Esophagus muscularis mucosa (tissue), 4 donors: ENCODE measurements at regions of chrX and their contacts with region 1.

Region 1: GRCh38 chrX:136214551-136214950 is 36.6 kb downstream of the MAP7D3 start:
- DNase-seq: no peak
- H3K4me3 ChIP-seq: no peak overlapping the region
- H3K27ac ChIP-seq: peak overlapping the region; percentile 86 to 99 (median 96)
- H3K4me1 ChIP-seq: peaks cover 0 to 21% (median 17%) of the 10 kb centered on the region in 4 donors
- H3K27me3 ChIP-seq: no peaks in the 10 kb centered on the region
- CTCF ChIP-seq: no peak
- EP300 ChIP-seq: no peak
- POLR2A ChIP-seq: no peak

Region 2: GRCh38 chrX:136047969-136048368 is 166.6 kb before region 1 on chrX:
- intact Hi-C with region 1: loop called (anchors 5 kb)
- DNase-seq: no peak
- H3K4me3 ChIP-seq: no peak overlapping the region
- H3K27ac ChIP-seq: peak overlapping the region in 1 of 4 donors; percentile 11
- H3K4me1 ChIP-seq: peaks cover 0 to 22% (median 11%) of the 10 kb centered on the region in 4 donors
- H3K27me3 ChIP-seq: peaks cover 0 to 2% (median 0%) of the 10 kb centered on the region in 4 donors
- CTCF ChIP-seq: no peak
- EP300 ChIP-seq: no peak
- POLR2A ChIP-seq: no peak

Region 3: GRCh38 chrX:136251041-136251991 is 36.8 kb after region 1 on chrX and contains the start of gene MAP7D3:
- intact Hi-C with region 1: loop called (anchors 5 kb)
- DNase-seq: no peak
- H3K4me3 ChIP-seq: peak within 1 kb of the TSS; percentile 73 to 85 (median 80)
- H3K27ac ChIP-seq: peak within 1 kb of the TSS; percentile 86 to 91 (median 88)
- H3K4me1 ChIP-seq: peaks cover 0 to 19% (median 10%) of the 10 kb centered on the region in 4 donors
- H3K27me3 ChIP-seq: peaks cover 0 to 4% (median 0%) of the 10 kb centered on the region in 4 donors
- CTCF ChIP-seq: no peak
- EP300 ChIP-seq: no peak
- POLR2A ChIP-seq: no peak
- total RNA-seq, gene MAP7D3: 14.5 to 21.2 (median 17.1) TPM

Region 4: GRCh38 chrX:136268051-136269048 is 53.8 kb after region 1 on chrX:
- intact Hi-C with region 1: loop called (anchors 5 kb)
- DNase-seq: no peak
- H3K4me3 ChIP-seq: no peak overlapping the region
- H3K27ac ChIP-seq: no peak overlapping the region
- H3K4me1 ChIP-seq: no peaks in the 10 kb centered on the region
- H3K27me3 ChIP-seq: no peaks in the 10 kb centered on the region
- CTCF ChIP-seq: peak; percentile 74 to 79 (median 79)
- EP300 ChIP-seq: no peak
- POLR2A ChIP-seq: no peak

Region 5: DNA sequence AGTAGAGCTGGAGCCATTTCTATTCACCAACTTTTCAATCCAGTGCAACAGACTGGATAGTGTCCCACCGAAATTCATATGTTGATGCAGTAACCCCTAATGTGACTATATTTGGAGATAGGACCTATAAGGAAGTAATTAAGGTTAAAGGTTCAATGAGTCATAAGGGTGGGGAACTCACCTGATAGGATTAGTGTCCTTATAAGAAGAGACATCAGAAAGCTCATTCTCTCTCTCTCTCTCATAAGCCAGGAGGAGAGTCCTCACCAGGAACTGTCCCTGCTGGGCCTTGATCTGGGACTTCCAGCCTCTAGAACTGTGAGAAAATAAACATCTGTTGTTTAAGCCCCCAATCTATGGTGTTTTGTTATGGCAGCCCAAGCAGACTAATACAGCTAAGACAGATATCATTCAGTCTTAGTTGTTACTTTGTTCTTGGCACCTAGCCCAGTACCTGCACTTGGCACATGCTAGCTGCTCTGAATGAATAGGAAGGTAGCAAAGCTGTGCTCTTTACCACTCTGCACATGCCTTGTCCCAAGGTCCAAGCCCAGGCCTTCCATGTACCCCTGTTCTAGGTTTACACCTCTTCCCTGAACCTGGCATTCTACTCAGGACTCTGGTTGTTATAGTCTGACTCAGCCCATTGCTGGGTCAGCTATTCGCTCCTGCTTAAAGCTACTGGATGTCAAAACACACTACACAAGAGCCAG is 254.0 kb after region 1 on chrX:
- intact Hi-C with region 1: no loop called
- DNase-seq: no peak
- H3K4me3 ChIP-seq: no peak overlapping the region
- H3K27ac ChIP-seq: no peak overlapping the region
- H3K4me1 ChIP-seq: no peaks in the 10 kb centered on the region
- H3K27me3 ChIP-seq: no peaks in the 10 kb centered on the region
- CTCF ChIP-seq: no peak
- EP300 ChIP-seq: no peak
- POLR2A ChIP-seq: no peak